Activated CD4-positive, alpha-beta T cell treated with anti-CD3 and anti-CD28 coated beads for 36 hours (primary cell): ENCODE measurements at regions of chr19 and their contacts with region 1.

Region 1: DNA sequence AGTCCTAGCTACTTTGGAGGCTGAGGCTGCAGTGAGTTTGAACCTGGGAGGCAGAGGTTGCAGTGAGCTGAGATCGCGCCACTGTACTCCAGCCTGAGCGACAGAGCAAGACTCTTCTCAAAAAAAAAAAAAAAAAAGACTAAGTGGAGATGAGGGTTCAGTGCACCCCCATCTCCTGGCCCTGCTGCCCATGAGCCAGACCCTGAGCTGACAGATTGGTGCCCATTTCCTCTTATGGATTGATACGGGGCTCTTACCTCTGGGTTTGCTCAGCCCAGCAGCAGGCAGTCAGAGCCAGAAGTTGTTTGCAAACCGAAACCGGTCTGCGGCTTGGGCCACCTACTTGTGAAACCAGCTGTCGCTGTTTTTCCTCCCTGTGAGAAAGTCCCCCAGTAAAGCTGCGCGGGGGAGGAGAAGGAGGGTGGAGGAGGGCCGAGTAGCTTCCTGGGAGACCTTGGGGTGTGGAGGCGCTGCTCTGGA is 36.9 kb downstream of the ARRDC2 start:
- DNase-seq: peak; percentile 96
- ATAC-seq: peak; percentile 94
- H3K4me3 Mint-ChIP-seq: peak overlapping the region; percentile 11
- H3K27ac Mint-ChIP-seq: peak overlapping the region; percentile 16
- H3K4me1 Mint-ChIP-seq: peaks cover 34% of the 10 kb centered on the region
- H3K27me3 Mint-ChIP-seq: peaks cover 9% of the 10 kb centered on the region

Region 2: DNA sequence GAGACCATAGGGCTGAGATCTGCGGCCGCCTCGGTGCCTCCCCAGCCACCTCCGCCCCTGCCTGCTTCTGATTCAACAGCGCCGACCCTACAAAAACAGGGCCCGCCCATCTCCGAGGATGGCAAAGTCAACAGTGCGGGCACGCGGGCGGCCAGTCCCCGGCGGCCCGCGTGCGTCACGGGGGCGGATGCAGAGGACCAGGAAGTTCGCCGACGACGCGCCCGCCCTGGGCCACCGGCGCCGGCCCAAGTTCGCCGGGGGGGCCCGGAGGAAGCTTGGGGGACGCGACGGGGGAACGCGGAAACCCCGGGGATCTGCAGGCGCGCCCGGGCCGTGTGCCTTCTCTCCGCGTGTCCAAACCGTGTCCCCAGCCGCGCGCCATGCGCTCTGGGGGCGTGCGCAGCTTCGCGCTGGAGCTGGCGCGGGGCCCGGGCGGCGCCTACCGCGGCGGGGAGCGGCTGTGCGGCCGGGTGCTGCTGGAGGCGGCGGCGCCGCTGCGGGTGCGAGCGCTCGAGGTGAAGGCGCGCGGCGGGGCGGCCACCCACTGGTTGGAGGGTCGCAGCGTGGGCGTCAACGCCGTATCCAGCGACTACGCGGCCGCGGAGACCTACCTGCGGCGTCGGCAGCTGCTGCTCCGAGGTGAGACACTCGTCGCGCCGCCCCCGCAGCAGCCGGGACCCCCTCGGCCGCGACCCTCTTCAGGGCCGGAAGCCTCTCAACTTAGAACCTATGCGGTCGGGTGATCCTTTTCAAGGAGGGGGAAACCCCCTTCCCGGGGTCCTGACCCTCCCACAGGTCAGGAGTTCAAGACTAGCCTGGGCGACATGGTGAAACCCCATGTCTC is 43.7 kb before region 1 on chr19:
- CTCF ChIA-PET with region 1: interaction called, 4 read pairs
- POLR2A ChIA-PET with region 1: no interaction called
- intact Hi-C with region 1: loop called in 1 of 2 experiments (anchors 1 kb)
- DNase-seq: peak; percentile 95
- ATAC-seq: peak; percentile 84
- H3K4me3 Mint-ChIP-seq: peak overlapping the region; percentile 85
- H3K27ac Mint-ChIP-seq: peak overlapping the region; percentile 95
- H3K4me1 Mint-ChIP-seq: peaks cover 25% of the 10 kb centered on the region
- H3K27me3 Mint-ChIP-seq: no peaks in the 10 kb centered on the region

Region 3: GRCh38 chr19:18021121-18021755 is 23.6 kb before region 1 on chr19:
- CTCF ChIA-PET with region 1: no interaction called
- POLR2A ChIA-PET with region 1: interaction called, 9 read pairs
- intact Hi-C with region 1: loop called in 1 of 2 experiments (anchors 2 kb)
- DNase-seq: peak; percentile 80
- ATAC-seq: peak; percentile 31
- H3K4me3 Mint-ChIP-seq: peak overlapping the region; percentile 70
- H3K27ac Mint-ChIP-seq: peak overlapping the region; percentile 90
- H3K4me1 Mint-ChIP-seq: peaks cover 60% of the 10 kb centered on the region
- H3K27me3 Mint-ChIP-seq: no peaks in the 10 kb centered on the region

Region 4: GRCh38 chr19:18058208-18059030 is 13.6 kb after region 1 on chr19:
- CTCF ChIA-PET with region 1: interaction called, 4 read pairs
- POLR2A ChIA-PET with region 1: interaction called, 3 read pairs
- intact Hi-C with region 1: loop called (anchors 1 to 2 kb)
- DNase-seq: peak; percentile 91
- ATAC-seq: peak; percentile 92
- H3K4me3 Mint-ChIP-seq: no peak overlapping the region
- H3K27ac Mint-ChIP-seq: peak overlapping the region; percentile 74
- H3K4me1 Mint-ChIP-seq: peaks cover 9% of the 10 kb centered on the region
- H3K27me3 Mint-ChIP-seq: no peaks in the 10 kb centered on the region

Region 5: DNA sequence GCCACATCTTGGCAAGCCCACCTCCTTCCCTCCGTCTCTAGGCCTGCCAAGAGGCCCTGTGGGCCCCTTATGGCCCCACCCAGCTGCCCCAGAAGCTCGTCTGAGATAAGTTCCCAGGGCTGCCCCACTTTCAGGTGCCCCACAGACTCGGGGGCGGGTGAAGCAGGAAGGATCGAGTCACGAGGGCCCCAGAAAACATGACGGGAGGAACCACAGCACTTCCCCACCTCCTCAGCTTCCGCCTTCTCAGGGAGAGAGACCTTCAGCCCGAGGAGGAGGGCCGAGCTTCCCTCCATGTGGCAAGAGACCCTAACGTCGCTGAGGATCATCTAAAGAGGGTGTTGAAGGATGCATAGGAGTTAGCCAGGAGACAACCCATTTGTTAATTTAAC is 46.3 kb after region 1 on chr19:
- CTCF ChIA-PET with region 1: interaction called, 3 read pairs
- POLR2A ChIA-PET with region 1: no interaction called
- intact Hi-C with region 1: loop called in 1 of 2 experiments (anchors 1 kb)
- DNase-seq: peak; percentile 92
- ATAC-seq: peak; percentile 73
- H3K4me3 Mint-ChIP-seq: peak overlapping the region; percentile 57
- H3K27ac Mint-ChIP-seq: peak overlapping the region; percentile 99
- H3K4me1 Mint-ChIP-seq: peaks cover 63% of the 10 kb centered on the region
- H3K27me3 Mint-ChIP-seq: no peaks in the 10 kb centered on the region